SK-N-SH (cell line): ENCODE measurements at regions of chr12 and their contacts with region 1.

Region 1: GRCh38 chr12:77999074-77999715 is 168.5 kb downstream of the NAV3 start:
- DNase-seq: no peak
- H3K4me3 ChIP-seq: no peak overlapping the region
- H3K27ac ChIP-seq: no peak overlapping the region
- H3K4me1 ChIP-seq: peaks cover 0 to 19% of the 10 kb centered on the region in 2 experiments; a peak in 1 of 4 replicates
- H3K27me3 ChIP-seq: no peaks in the 10 kb centered on the region
- CTCF ChIP-seq: no peak
- EP300 ChIP-seq: no peak
- RAD21 ChIP-seq: no peak

Region 2: DNA sequence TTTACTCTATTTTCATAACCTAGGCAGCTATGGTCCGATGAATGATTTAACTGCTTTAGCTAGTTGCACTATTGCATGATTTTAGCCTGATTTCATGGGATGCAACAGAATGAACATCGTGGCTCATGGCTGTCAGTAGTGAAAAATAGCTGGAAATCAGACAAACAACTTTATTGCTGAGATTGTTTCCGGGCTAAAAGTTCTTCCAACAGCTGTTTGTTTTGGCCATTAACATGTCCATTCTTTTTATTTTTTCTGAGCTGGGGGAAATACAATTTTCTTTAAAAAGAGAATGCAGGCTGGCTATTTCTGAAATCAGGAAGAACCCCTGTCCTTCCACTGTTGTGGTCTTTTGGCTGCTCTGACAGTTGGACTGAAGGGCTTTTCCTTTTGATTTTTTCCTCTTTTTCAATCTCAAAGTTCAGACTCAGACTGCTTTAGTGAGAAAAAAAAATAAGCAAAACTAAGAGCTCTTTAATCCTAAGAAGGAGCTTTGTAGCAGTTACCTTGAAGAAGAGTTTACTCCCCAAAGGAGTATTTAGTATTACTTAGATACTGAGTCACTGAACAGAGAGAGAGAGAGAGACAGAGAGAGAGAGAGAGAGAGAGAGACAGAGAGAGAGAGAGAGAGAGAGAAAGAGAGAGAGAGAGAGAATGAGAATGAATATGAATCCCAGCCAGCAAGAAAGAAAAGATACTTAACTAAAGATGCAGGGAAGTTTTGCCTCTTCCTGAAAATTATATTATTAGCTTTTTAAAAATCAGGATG is 168.4 kb before region 1 on chr12 and contains the start of gene NAV3:
- CTCF ChIA-PET with region 1: no interaction called
- POLR2A ChIA-PET with region 1: no interaction called
- DNase-seq: no peak
- H3K4me3 ChIP-seq: peak within 1 kb of the TSS in 1 of 2 experiments; percentile 16; a peak in 1 of 4 replicates
- H3K27ac ChIP-seq: peak within 1 kb of the TSS in 1 of 2 experiments; percentile 39; a peak in 1 of 4 replicates
- H3K4me1 ChIP-seq: peaks cover 0 to 25% of the 10 kb centered on the region in 2 experiments; a peak in 1 of 4 replicates
- H3K27me3 ChIP-seq: no peaks in the 10 kb centered on the region
- CTCF ChIP-seq: peak; percentile 18; the same call in 1 of the 2 replicates
- EP300 ChIP-seq: no peak
- RAD21 ChIP-seq: no peak
- polyA plus RNA-seq, gene NAV3: 10.5 and 15.9 TPM in 2 replicates

Region 3: GRCh38 chr12:78096909-78097597 is 97.9 kb after region 1 on chr12:
- CTCF ChIA-PET with region 1: interaction called, 19 read pairs
- POLR2A ChIA-PET with region 1: no interaction called
- DNase-seq: peak; percentile 60
- H3K4me3 ChIP-seq: no peak overlapping the region
- H3K27ac ChIP-seq: peak overlapping the region; percentile 41 to 99
- H3K4me1 ChIP-seq: peaks cover 0 to 11% of the 10 kb centered on the region in 2 experiments; a peak in 2 of 4 replicates
- H3K27me3 ChIP-seq: no peaks in the 10 kb centered on the region
- CTCF ChIP-seq: peak; percentile 43; the same call in 1 of the 2 replicates
- EP300 ChIP-seq: peak; percentile 44 to 64; a peak in 3 of 4 replicates
- RAD21 ChIP-seq: peak; percentile 72

Region 4: DNA sequence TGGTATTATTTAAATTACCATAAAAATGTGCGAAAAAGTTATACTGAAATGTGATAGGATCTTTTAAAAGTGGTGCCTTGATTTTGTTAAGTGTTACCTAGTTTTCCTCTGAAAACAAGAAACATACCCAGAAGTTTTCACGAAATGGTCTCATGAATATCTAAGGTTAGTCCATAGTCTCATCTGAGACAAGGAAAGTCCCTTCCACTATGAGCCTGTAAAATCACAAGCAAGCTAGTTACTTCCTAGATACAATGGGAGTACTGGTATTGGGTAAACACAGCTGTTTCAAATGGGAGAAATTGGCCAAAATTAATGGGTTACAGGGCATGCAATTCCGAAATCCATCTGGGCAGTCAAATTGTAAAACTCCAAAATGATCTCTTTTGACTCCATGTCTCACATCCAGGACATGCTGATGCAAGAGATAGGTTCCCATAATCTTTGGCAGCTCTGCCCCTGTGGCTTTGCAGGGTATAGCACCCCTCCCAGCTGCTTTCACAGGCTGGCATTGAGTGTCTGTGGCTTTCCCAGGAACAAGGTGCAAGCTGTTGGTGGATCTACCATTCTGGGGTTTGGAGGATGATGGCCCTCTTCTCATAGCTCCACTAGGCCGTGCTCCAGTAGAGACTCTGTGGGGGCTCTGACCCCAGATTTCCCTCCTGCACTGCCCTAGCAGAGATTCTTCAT is 102.9 kb after region 1 on chr12:
- CTCF ChIA-PET with region 1: interaction called, 19 read pairs
- POLR2A ChIA-PET with region 1: no interaction called
- DNase-seq: no peak
- H3K4me3 ChIP-seq: no peak overlapping the region
- H3K27ac ChIP-seq: no peak overlapping the region
- H3K4me1 ChIP-seq: peaks cover 0 to 5% of the 10 kb centered on the region in 2 experiments; a peak in 2 of 4 replicates
- H3K27me3 ChIP-seq: no peaks in the 10 kb centered on the region
- CTCF ChIP-seq: no peak
- EP300 ChIP-seq: no peak
- RAD21 ChIP-seq: no peak

Region 5: DNA sequence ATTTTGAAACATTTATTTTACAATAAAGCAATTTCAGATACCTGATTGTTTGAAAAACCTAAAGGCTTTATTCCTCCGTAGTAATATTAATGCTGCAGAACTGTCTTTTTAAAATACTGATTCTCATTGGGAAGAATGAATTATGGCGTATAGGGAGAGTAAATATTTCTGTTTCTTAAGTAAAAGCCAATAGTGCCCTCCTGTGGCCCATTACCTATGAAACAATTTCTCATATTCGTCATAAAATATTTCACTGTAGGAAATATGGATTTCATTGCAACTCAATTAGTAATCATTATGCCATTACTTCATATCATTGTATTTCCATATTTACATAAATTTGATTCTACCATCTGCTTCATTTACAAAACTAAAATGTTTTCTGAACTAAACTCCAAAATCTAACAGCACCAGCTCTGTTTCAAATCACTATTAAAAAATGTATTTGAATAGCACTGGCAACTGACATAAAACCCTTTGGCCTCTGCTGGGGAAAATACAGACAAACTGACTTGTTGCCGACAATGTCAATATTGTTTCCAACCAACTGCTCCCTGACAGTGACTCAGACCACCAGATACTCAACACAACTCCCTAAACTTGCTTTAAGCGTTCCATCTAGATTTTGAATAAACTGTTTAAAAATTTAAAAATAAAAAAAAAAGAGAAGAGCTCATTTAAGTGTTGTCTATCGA is 121.8 kb after region 1 on chr12:
- CTCF ChIA-PET with region 1: interaction called, 62 read pairs
- POLR2A ChIA-PET with region 1: no interaction called
- DNase-seq: peak; percentile 35
- H3K4me3 ChIP-seq: no peak overlapping the region
- H3K27ac ChIP-seq: no peak overlapping the region; a peak in 1 of 4 replicates
- H3K4me1 ChIP-seq: peaks cover 0 to 3% of the 10 kb centered on the region in 2 experiments; a peak in 3 of 4 replicates
- H3K27me3 ChIP-seq: no peaks in the 10 kb centered on the region
- CTCF ChIP-seq: peak; percentile 63
- EP300 ChIP-seq: no peak
- RAD21 ChIP-seq: peak; percentile 84